Activated T-helper 2 cell treated with anti-CD3 and anti-CD28 coated beads, Interferon-gamma antibody, Interleukin-2, Interleukin-4, amounts not matched to agents 10 μg/mL and 5 μg/mL and 100 μg/mL, durations not matched to agents 14 hours and 24 hours and 36 hours (primary cell): ENCODE measurements at regions of chrX and their contacts with region 1.

Region 1: DNA sequence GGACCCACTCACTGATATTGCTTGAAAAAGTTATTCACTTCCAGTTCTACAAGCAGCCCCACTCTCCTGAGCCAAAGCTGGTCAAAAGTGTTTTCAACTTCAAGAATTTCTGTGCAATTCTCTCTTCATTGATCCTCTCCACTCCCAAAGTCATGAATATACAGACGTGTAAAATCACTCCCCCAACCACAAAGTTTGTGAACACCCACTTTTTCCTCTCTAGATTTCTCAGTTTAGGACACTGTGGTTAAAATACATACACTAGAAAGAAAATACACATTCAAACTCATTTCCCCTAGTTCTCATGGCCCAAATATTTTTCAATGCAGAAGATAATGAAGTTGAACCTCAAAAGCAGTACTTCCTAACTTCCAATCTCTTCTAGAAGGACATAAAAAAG is 116.3 kb downstream of the MSN start:
- DNase-seq: no peak
- H3K4me3 Mint-ChIP-seq: no peak overlapping the region
- H3K27ac Mint-ChIP-seq: no peak overlapping the region
- H3K4me1 Mint-ChIP-seq: peaks cover 22% of the 10 kb centered on the region
- H3K27me3 Mint-ChIP-seq: no peaks in the 10 kb centered on the region

Region 2: GRCh38 chrX:65744965-65745364 is 38.8 kb before region 1 on chrX:
- intact Hi-C with region 1: loop called (anchors 5 kb)
- DNase-seq: no peak
- H3K4me3 Mint-ChIP-seq: no peak overlapping the region
- H3K27ac Mint-ChIP-seq: no peak overlapping the region
- H3K4me1 Mint-ChIP-seq: peaks cover 48% of the 10 kb centered on the region
- H3K27me3 Mint-ChIP-seq: no peaks in the 10 kb centered on the region